CD8-positive, alpha-beta T cell (primary cell): ENCODE measurements at regions of chr4 and their contacts with region 1.

Region 1: DNA sequence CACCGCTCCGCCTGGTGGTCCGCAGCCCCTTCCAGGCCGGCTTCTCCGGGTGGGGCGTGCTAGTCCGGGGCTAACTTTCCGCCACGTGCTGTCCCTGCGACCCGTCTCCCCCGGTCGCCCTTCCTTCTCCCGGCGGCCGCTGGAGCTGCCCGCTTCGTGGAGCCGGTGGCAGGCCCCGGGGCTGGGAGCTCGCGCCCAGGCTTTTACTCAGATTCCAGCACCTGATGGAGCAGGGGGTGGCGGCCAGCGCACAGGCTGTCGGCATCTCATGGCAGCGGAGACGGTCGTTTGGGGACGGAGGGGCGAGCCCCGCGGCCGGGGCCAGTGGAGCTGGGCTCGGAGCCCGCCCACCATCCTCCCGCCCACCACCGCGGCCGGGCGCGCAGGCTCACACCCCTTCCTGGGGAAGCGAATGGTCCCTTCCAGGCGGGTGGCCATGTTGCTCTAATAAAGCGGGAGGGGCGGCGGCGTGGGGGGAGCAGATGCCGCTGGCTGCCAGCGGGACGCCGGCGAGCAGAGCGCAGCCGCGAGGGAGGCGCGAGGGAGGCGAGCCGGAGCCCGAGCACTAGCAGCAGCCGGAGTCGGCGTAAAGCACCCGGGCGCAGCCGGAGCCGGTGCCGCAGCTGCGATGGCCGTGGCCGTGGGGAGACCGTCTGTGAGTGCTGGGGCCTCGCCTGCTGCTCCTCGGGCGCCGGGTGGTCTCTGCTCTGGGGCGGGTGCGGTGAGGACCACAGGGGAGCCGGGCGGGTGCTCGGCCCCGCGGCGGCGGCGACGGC is at the start of gene SEPTIN11:
- DNase-seq: peak; percentile 74 to 94 (median 84)
- ATAC-seq: peak; percentile 74
- H3K4me3 ChIP-seq: peak within 1 kb of the TSS; percentile 88 to 89
- H3K4me3 Mint-ChIP-seq: peak within 1 kb of the TSS; percentile 92
- H3K27ac ChIP-seq: peak within 1 kb of the TSS; percentile 56 to 66
- H3K27ac Mint-ChIP-seq: peak within 1 kb of the TSS; percentile 77
- H3K4me1 ChIP-seq: peaks cover 15% of the 10 kb centered on the region
- H3K4me1 Mint-ChIP-seq: peaks cover 24% of the 10 kb centered on the region
- H3K27me3 ChIP-seq: no peaks in the 10 kb centered on the region
- H3K27me3 Mint-ChIP-seq: no peaks in the 10 kb centered on the region
- CTCF ChIP-seq: no peak
- total RNA-seq, gene SEPTIN11: 12.3 to 13.1 TPM

Region 2: GRCh38 chr4:75514131-75514948 is 1435.1 kb before region 1 on chr4 and contains the starts of genes RCHY1 and THAP6:
- CTCF ChIA-PET with region 1: no interaction called
- POLR2A ChIA-PET with region 1: no interaction called
- intact Hi-C with region 1: loop called in 1 of 2 experiments (anchors 2 kb)
- DNase-seq: peak; percentile 84 to 97 (median 92)
- ATAC-seq: peak; percentile 87
- H3K4me3 ChIP-seq: peak within 1 kb of the TSS; percentile 92 to 94
- H3K4me3 Mint-ChIP-seq: no peak within 1 kb of the TSS
- H3K27ac ChIP-seq: peak within 1 kb of the TSS; percentile 96 to 98
- H3K27ac Mint-ChIP-seq: peak within 1 kb of the TSS; percentile 99
- H3K4me1 ChIP-seq: peaks cover 55% of the 10 kb centered on the region
- H3K4me1 Mint-ChIP-seq: peaks cover 63% of the 10 kb centered on the region
- H3K27me3 ChIP-seq: no peaks in the 10 kb centered on the region
- H3K27me3 Mint-ChIP-seq: no peaks in the 10 kb centered on the region
- CTCF ChIP-seq: no peak
- total RNA-seq, gene RCHY1: 45.4 to 52.8 TPM
- total RNA-seq, gene THAP6: 15.3 to 16.3 TPM

Region 3: DNA sequence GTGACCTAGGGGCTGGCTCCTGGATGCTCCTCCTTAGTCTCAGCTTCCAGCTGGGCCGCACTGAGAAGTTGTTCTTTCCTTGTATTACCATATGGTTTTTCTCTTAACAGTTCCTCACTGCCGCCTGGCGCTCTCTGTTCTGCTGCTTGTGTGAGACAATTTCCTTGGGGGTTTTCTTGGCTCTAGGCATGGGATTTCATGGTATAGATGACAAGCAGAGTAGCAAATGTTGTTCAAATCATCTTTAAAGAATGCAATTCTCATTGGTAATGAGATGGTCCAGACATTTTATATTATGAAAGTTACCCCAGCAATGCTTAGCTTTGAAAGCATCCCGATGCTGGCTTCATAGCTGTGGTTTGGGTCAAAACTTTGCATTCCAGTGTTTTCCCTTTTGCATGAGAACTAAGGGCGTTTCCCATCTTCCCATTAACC is 37.7 kb after region 1 on chr4:
- CTCF ChIA-PET with region 1: interaction called, 3 read pairs
- POLR2A ChIA-PET with region 1: interaction called, 10 read pairs
- intact Hi-C with region 1: loop called (anchors 1 to 2 kb)
- DNase-seq: no peak
- ATAC-seq: no peak
- H3K4me3 ChIP-seq: no peak overlapping the region
- H3K4me3 Mint-ChIP-seq: no peak overlapping the region
- H3K27ac ChIP-seq: no peak overlapping the region
- H3K27ac Mint-ChIP-seq: no peak overlapping the region
- H3K4me1 ChIP-seq: peaks cover 67% of the 10 kb centered on the region
- H3K4me1 Mint-ChIP-seq: peaks cover 89% of the 10 kb centered on the region
- H3K27me3 ChIP-seq: no peaks in the 10 kb centered on the region
- H3K27me3 Mint-ChIP-seq: no peaks in the 10 kb centered on the region
- CTCF ChIP-seq: no peak

Region 4: GRCh38 chr4:76993787-76994641 is 44.5 kb after region 1 on chr4:
- CTCF ChIA-PET with region 1: interaction called, 11 read pairs
- POLR2A ChIA-PET with region 1: interaction called, 10 read pairs
- intact Hi-C with region 1: loop called (anchors 1 to 2 kb)
- DNase-seq: peak; percentile 10 to 81 (median 54)
- ATAC-seq: peak; percentile 65
- H3K4me3 ChIP-seq: peak overlapping the region in 1 of 2 experiments; percentile 55
- H3K4me3 Mint-ChIP-seq: peak overlapping the region; percentile 75
- H3K27ac ChIP-seq: peak overlapping the region; percentile 2 to 39
- H3K27ac Mint-ChIP-seq: peak overlapping the region; percentile 89
- H3K4me1 ChIP-seq: peaks cover 57% of the 10 kb centered on the region
- H3K4me1 Mint-ChIP-seq: peaks cover 61% of the 10 kb centered on the region
- H3K27me3 ChIP-seq: no peaks in the 10 kb centered on the region
- H3K27me3 Mint-ChIP-seq: no peaks in the 10 kb centered on the region
- CTCF ChIP-seq: no peak

Region 5: DNA sequence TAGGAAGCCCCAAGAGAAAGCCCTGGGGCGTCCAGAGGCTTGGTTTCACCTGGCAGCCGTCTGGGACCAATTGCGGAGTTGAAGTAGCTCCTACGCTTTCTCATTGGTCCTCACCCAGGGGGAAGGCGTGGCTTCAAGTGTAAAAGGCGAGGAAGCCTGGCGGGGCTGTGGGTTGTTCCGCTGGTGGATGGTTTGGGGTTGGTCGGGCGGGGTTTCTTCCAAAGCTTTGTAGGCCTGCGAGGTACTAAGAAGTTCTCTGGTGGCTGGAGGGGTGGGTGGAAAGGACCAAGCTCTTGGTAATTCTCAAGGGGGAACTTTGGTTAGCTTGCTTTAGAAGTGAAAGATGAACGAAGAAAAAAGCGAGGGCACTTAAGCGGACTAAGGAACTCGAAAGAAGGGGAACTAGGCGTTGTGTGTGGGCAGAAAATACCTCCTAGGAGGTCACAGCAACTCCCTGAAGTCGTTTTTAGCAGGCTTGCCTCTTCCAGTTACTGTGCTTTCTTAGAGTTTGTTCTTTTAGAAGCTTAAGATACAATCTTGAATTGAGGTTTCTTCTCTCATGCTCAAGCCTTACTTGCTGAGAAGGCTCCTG is 244.1 kb after region 1 on chr4:
- CTCF ChIA-PET with region 1: no interaction called
- POLR2A ChIA-PET with region 1: no interaction called
- intact Hi-C with region 1: loop called (anchors 5 to 10 kb)
- DNase-seq: peak; percentile 31 to 83 (median 77)
- ATAC-seq: peak; percentile 99
- H3K4me3 ChIP-seq: peak overlapping the region; percentile 34 to 44
- H3K4me3 Mint-ChIP-seq: peak overlapping the region; percentile 91
- H3K27ac ChIP-seq: peak overlapping the region in 1 of 2 experiments; percentile 23
- H3K27ac Mint-ChIP-seq: peak overlapping the region; percentile 90
- H3K4me1 ChIP-seq: peaks cover 13% of the 10 kb centered on the region
- H3K4me1 Mint-ChIP-seq: peaks cover 17% of the 10 kb centered on the region
- H3K27me3 ChIP-seq: no peaks in the 10 kb centered on the region
- H3K27me3 Mint-ChIP-seq: peaks cover 4% of the 10 kb centered on the region
- CTCF ChIP-seq: no peak